Naive thymus-derived CD4-positive, alpha-beta T cell (primary cell): ENCODE measurements at regions of chr6 and their contacts with region 1.

Region 1: DNA sequence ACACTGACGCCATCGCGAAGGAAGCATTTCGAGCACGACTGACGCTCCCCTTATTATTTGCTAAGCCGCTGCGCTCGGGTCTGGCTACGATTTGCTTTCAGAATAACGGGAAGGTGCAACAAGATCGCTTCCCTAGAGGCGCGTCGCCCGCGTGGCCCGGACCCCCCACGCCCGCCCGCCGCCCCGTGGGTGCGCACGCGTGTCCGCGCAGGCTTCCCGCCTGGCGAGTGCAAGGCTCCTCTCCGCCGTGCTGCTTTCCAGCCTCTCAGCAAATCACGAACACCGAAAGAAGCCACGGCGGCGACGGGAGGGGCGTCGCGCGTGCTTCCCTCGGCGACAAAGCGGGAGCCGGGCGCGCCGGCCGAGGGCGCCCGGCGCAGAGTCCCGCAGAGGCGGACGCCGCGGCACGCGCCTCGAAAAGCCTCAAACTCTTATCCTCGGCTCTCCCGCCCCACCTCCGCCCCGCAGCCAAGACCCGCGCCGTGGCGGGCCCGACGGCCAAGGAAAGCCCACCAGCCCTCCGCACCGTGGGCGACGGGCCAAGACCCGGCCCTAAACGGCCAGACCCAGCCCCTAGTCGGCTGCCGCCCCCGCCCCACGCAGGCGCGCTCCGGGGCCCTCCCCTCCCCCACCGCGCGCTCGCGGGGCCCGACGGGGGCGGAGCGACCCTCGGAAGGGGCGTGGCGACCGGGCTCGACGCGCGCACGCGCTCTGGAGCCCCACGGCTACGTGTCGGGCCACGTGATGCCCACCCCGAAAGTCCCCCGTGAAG is 987 bp upstream of the QKI start:
- DNase-seq: peak; percentile 92 to 99 (median 96)
- ATAC-seq: peak; percentile 86
- H3K4me3 ChIP-seq: peak overlapping the region; percentile 62
- H3K4me3 Mint-ChIP-seq: peak overlapping the region; percentile 88 to 95 (median 90)
- H3K27ac ChIP-seq: peak overlapping the region; percentile 88
- H3K27ac Mint-ChIP-seq: peak overlapping the region; percentile 84 to 96 (median 92)
- H3K4me1 ChIP-seq: peaks cover 5 to 17% of the 10 kb centered on the region in 2 donors
- H3K4me1 Mint-ChIP-seq: peaks cover 16 to 43% (median 34%) of the 10 kb centered on the region in 7 donors
- H3K27me3 ChIP-seq: no peaks in the 10 kb centered on the region
- H3K27me3 Mint-ChIP-seq: peaks cover 0 to 17% (median 0%) of the 10 kb centered on the region in 5 donors

Region 2: DNA sequence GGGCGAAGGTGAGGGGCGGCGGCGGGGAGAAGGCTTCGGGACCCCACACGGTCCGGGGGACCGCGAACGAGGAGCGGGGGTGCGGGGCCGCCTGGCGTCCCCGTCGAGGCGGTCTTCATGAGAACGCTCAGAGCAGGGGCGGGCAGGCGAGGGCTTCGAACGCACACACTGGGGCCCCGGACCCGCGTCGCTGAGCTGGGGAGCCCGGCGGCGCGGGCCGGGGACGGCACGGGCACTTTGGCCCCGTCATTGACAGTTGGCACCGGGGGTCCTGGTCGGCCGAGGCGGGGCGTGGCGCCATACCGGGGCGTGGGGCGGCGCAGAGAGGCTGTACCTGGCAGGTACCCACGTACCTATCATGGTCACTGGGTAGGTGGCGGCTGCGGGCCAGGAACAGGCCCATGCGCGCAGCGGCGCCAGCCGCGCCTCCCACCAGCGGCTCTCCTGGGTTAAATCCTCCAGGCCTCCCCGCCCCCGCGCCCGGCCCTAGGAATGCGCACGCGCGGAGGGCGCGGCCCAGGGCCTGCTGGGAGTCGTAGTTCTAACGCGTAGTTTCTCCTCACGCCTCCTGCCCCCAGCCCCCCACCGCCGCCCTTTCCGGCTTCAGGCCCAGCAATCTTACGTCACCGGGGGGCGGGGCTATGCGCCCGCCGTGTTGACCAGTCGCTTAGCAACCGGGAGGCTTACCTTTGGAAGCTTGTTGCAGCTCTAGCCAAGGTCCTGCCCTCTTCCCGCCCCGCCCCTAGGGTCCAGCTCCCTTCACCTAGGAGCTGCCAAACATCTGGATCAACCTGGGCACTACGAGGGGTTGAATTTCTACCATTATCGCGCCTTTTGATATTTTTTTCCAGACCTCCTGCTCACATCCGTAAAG is 686.0 kb before region 1 on chr6 and contains the starts of genes PACRG and PRKN:
- CTCF ChIA-PET with region 1: no interaction called
- POLR2A ChIA-PET with region 1: no interaction called
- intact Hi-C with region 1: loop called (anchors 1 to 2 kb)
- DNase-seq: peak; percentile 97 to 99 (median 97)
- ATAC-seq: peak; percentile 95
- H3K4me3 ChIP-seq: peak within 1 kb of the TSS; percentile 72
- H3K4me3 Mint-ChIP-seq: peak within 1 kb of the TSS; percentile 92 to 98 (median 96)
- H3K27ac ChIP-seq: peak within 1 kb of the TSS; percentile 90
- H3K27ac Mint-ChIP-seq: peak within 1 kb of the TSS; percentile 88 to 99 (median 97)
- H3K4me1 ChIP-seq: no peaks in the 10 kb centered on the region
- H3K4me1 Mint-ChIP-seq: peaks cover 6 to 20% (median 14%) of the 10 kb centered on the region in 7 donors
- H3K27me3 ChIP-seq: no peaks in the 10 kb centered on the region
- H3K27me3 Mint-ChIP-seq: peaks cover 0 to 13% (median 0%) of the 10 kb centered on the region in 5 donors
- total RNA-seq, gene PACRG: 0.89 to 1.7 (median 1.4) TPM in 4 of 5 experiments, not detected in the other
- total RNA-seq, gene PRKN: 0.44 to 9.0 (median 8.1) TPM

Region 3: DNA sequence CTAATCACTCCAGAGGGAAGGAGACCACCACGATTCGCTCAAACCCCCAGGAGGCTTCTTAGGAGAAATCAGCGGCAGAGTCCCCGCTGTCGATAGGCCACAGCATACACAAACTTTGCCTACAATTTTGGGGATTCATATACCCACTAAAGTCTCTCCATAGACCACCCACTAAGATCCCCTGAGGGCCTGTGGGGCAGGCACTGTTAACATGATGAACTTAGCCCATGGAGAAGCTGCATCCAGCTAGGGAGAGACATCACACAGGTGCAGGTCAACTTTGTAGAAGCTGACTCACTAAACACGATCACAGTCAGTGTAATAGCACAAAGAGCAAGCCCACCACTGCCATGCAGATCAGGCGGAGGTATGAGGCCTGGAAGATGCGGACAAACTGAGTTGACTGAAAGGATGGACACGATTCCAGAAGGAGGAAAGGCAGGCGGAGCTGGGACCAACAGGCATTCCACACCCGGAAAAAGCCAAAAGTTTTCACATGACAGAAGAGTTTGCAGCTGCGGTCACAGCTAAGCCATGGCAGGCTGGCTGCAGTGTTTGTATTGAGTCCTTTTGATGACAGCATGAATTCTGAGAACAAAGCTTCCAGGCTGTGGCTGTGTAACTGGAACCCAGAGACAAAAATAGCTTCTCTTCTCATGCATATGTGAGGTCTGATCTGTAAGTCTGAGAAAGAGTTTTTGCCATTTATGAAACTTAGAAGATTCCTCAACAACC is 74.7 kb before region 1 on chr6:
- CTCF ChIA-PET with region 1: no interaction called
- POLR2A ChIA-PET with region 1: no interaction called
- intact Hi-C with region 1: no loop called
- DNase-seq: no peak
- ATAC-seq: no peak
- H3K4me3 ChIP-seq: no peak overlapping the region
- H3K4me3 Mint-ChIP-seq: no peak overlapping the region
- H3K27ac ChIP-seq: no peak overlapping the region
- H3K27ac Mint-ChIP-seq: no peak overlapping the region
- H3K4me1 ChIP-seq: no peaks in the 10 kb centered on the region
- H3K4me1 Mint-ChIP-seq: peaks cover 0 to 6% (median 0%) of the 10 kb centered on the region in 7 donors
- H3K27me3 ChIP-seq: no peaks in the 10 kb centered on the region
- H3K27me3 Mint-ChIP-seq: peaks cover under 1 to 32% (median 19%) of the 10 kb centered on the region in 5 donors

Region 4: GRCh38 chr6:163460307-163460782 is 46.8 kb after region 1 on chr6:
- CTCF ChIA-PET with region 1: interaction called, 3 read pairs
- POLR2A ChIA-PET with region 1: interaction called, 14 read pairs
- intact Hi-C with region 1: loop called (anchors 1 kb)
- DNase-seq: peak in 7 of 9 donors; percentile 27 to 68 (median 60)
- ATAC-seq: peak; percentile 83
- H3K4me3 ChIP-seq: peak overlapping the region; percentile 55
- H3K4me3 Mint-ChIP-seq: peak overlapping the region; percentile 79 to 100 (median 96)
- H3K27ac ChIP-seq: peak overlapping the region; percentile 74
- H3K27ac Mint-ChIP-seq: peak overlapping the region; percentile 97 to 100 (median 99)
- H3K4me1 ChIP-seq: peaks cover 14 to 28% of the 10 kb centered on the region in 2 donors
- H3K4me1 Mint-ChIP-seq: peaks cover 32 to 82% (median 60%) of the 10 kb centered on the region in 7 donors
- H3K27me3 ChIP-seq: no peaks in the 10 kb centered on the region
- H3K27me3 Mint-ChIP-seq: no peaks in the 10 kb centered on the region

Region 5: GRCh38 chr6:163554663-163555062 is 141.1 kb after region 1 on chr6:
- CTCF ChIA-PET with region 1: interaction called, 6 read pairs
- POLR2A ChIA-PET with region 1: no interaction called
- intact Hi-C with region 1: loop called (anchors 1 kb)
- DNase-seq: peak; percentile 17 to 49 (median 42)
- ATAC-seq: peak; percentile 75
- H3K4me3 ChIP-seq: no peak overlapping the region
- H3K4me3 Mint-ChIP-seq: no peak overlapping the region
- H3K27ac ChIP-seq: no peak overlapping the region
- H3K27ac Mint-ChIP-seq: peak overlapping the region in 4 of 9 donors; percentile 3 to 49 (median 10)
- H3K4me1 ChIP-seq: no peaks in the 10 kb centered on the region
- H3K4me1 Mint-ChIP-seq: peaks cover 4 to 20% (median 7%) of the 10 kb centered on the region in 7 donors
- H3K27me3 ChIP-seq: peaks cover 0 to 3% of the 10 kb centered on the region in 2 donors
- H3K27me3 Mint-ChIP-seq: no peaks in the 10 kb centered on the region

Region 6: DNA sequence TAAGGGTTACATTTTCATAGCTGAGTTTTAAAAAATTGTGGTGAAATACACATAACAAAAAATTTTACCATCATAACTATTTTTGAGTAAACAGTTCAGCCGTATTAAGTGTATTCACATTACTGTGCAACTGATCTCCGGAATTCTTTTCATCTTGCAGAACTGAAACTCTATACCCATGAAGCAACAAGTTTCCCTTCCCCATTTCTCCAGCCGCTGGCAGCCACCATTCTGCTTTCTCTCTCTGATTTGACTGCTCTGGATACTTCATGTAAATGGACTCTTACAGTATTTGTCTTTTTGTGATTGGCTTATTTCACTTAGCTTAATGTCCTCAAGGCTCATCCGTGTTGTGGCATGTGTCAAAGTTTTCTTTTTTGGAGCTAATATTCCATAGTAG is 342.5 kb after region 1 on chr6:
- CTCF ChIA-PET with region 1: no interaction called
- POLR2A ChIA-PET with region 1: no interaction called
- intact Hi-C with region 1: loop called in 1 of 2 experiments (anchors 10 kb)
- DNase-seq: no peak
- ATAC-seq: peak; percentile 76
- H3K4me3 ChIP-seq: no peak overlapping the region
- H3K4me3 Mint-ChIP-seq: no peak overlapping the region
- H3K27ac ChIP-seq: no peak overlapping the region
- H3K27ac Mint-ChIP-seq: no peak overlapping the region
- H3K4me1 ChIP-seq: no peaks in the 10 kb centered on the region
- H3K4me1 Mint-ChIP-seq: peaks cover 0 to 12% (median 4%) of the 10 kb centered on the region in 7 donors
- H3K27me3 ChIP-seq: peaks cover 0 to 3% of the 10 kb centered on the region in 2 donors
- H3K27me3 Mint-ChIP-seq: peaks cover 9 to 36% (median 13%) of the 10 kb centered on the region in 5 donors

Region 7: GRCh38 chr6:163956571-163957407 is 543.3 kb after region 1 on chr6:
- CTCF ChIA-PET with region 1: no interaction called
- POLR2A ChIA-PET with region 1: no interaction called
- intact Hi-C with region 1: loop called (anchors 1 kb)
- DNase-seq: peak; percentile 5 to 50 (median 29)
- ATAC-seq: peak; percentile 78
- H3K4me3 ChIP-seq: no peak overlapping the region
- H3K4me3 Mint-ChIP-seq: no peak overlapping the region
- H3K27ac ChIP-seq: no peak overlapping the region
- H3K27ac Mint-ChIP-seq: no peak overlapping the region
- H3K4me1 ChIP-seq: no peaks in the 10 kb centered on the region
- H3K4me1 Mint-ChIP-seq: peaks cover 0 to 4% (median 0%) of the 10 kb centered on the region in 7 donors
- H3K27me3 ChIP-seq: no peaks in the 10 kb centered on the region
- H3K27me3 Mint-ChIP-seq: peaks cover 18 to 42% (median 27%) of the 10 kb centered on the region in 5 donors

Region 8: GRCh38 chr6:164927288-164928056 is 1513.9 kb after region 1 on chr6:
- CTCF ChIA-PET with region 1: no interaction called
- POLR2A ChIA-PET with region 1: no interaction called
- intact Hi-C with region 1: loop called in 1 of 2 experiments (anchors 5 kb)
- DNase-seq: peak in 7 of 9 donors; percentile 33 to 49 (median 41)
- ATAC-seq: peak; percentile 53
- H3K4me3 ChIP-seq: no peak overlapping the region
- H3K4me3 Mint-ChIP-seq: no peak overlapping the region
- H3K27ac ChIP-seq: no peak overlapping the region
- H3K27ac Mint-ChIP-seq: no peak overlapping the region
- H3K4me1 ChIP-seq: no peaks in the 10 kb centered on the region
- H3K4me1 Mint-ChIP-seq: no peaks in the 10 kb centered on the region
- H3K27me3 ChIP-seq: no peaks in the 10 kb centered on the region
- H3K27me3 Mint-ChIP-seq: no peaks in the 10 kb centered on the region